ENCODE measurements at regions of chr10 and their contacts with region 1.

Region 1: GRCh38 chr10:70348228-70348850 is 34.1 kb downstream of the LRRC20 start:
- DNase-seq: peak; percentile 56
- CTCF ChIP-seq: peak; percentile 37

Region 2: DNA sequence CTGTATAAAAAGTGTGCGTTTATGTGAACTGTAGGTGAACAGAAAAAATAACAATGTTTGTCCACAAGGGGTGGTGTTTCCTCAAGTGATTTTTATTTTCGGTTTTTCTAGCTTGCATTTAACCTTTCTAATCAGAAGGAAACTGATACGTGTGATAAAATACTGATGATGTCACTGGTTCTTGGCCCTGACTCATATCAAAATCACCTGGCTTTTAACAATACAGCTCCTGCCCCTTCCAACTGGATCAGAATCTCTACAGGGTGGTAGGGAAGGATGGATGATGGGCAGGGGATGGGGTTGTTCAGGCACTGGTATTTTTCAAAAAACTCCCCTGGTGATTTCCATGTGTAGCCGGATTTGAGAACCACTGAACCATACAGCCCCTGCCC is 75.4 kb before region 1 on chr10:
- CTCF ChIA-PET with region 1: interaction called, 11 read pairs
- POLR2A ChIA-PET with region 1: no interaction called
- DNase-seq: peak; percentile 75
- CTCF ChIP-seq: peak; percentile 34

Region 3: GRCh38 chr10:70337201-70337651 is 11.1 kb before region 1 on chr10:
- CTCF ChIA-PET with region 1: interaction called, 11 read pairs
- POLR2A ChIA-PET with region 1: no interaction called
- DNase-seq: no peak
- CTCF ChIP-seq: no peak

Region 4: GRCh38 chr10:70404036-70404786 is 55.9 kb after region 1 on chr10 and contains the start of gene EIF4EBP2:
- CTCF ChIA-PET with region 1: no interaction called
- POLR2A ChIA-PET with region 1: no interaction called
- DNase-seq: peak; percentile 95
- CTCF ChIP-seq: no peak

Region 5: GRCh38 chr10:70722820-70723424 is 374.6 kb after region 1 on chr10:
- CTCF ChIA-PET with region 1: no interaction called
- POLR2A ChIA-PET with region 1: no interaction called
- DNase-seq: no peak
- CTCF ChIP-seq: no peak

Region 6: GRCh38 chr10:71052076-71052660 is 703.8 kb after region 1 on chr10:
- CTCF ChIA-PET with region 1: no interaction called
- POLR2A ChIA-PET with region 1: no interaction called
- DNase-seq: no peak
- CTCF ChIP-seq: no peak